ENCODE measurements at regions of chr5 and their contacts with region 1.

Region 1: GRCh38 chr5:88729084-88729828 is 153.7 kb downstream of the MEF2C start:
- DNase-seq: peak in 1 of 2 donors; percentile 74
- H3K4me3 ChIP-seq: no peak overlapping the region
- CTCF ChIP-seq: peak in 1 of 3 donors; percentile 57
- POLR2A ChIP-seq: no peak

Region 2: GRCh38 chr5:88690409-88691229 is 38.6 kb before region 1 on chr5:
- intact Hi-C with region 1: no loop called
- DNase-seq: peak; percentile 48 to 93
- H3K4me3 ChIP-seq: no peak overlapping the region
- CTCF ChIP-seq: no peak
- POLR2A ChIP-seq: no peak

Region 3: DNA sequence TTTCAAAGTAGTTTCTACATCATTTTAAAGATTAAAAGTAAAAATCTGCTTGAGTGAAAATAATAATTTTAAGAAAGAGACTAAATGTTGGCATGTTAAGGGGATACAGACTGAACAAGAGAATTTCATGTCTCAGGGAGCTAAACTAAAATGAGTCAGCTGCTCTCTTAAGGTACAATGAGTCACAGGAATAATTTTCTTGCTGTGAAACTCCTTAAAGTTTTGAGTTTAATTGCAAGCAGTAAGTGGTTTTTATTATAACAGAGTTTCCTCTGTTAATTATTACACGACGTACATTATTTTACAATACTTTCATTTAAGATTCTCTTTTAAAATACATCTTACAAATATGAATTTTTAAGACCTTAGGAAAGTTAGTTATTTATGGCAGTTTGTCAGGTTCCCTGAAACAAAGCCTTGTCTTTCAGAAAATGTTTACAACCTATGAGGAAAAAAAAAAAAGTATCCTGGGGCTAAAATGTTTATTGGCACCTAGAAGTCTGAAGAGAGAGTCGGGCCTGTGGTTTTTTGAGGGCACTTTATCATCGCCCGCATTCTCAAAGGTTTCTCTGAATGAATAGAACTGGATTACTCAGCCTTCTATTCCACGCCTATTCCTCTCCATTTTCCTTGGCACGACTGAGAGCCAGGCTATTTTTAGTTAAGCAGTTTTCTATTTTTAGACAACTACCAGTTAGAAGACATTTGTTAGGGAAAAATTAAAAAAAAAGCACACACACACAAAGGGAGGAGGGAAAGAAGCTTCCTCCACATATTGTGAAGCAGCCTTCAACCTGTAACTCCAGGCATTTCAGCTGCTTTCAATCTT is 56.3 kb after region 1 on chr5:
- intact Hi-C with region 1: no loop called
- DNase-seq: peak in 1 of 2 donors; percentile 31
- H3K4me3 ChIP-seq: no peak overlapping the region
- CTCF ChIP-seq: no peak
- POLR2A ChIP-seq: no peak

Region 4: DNA sequence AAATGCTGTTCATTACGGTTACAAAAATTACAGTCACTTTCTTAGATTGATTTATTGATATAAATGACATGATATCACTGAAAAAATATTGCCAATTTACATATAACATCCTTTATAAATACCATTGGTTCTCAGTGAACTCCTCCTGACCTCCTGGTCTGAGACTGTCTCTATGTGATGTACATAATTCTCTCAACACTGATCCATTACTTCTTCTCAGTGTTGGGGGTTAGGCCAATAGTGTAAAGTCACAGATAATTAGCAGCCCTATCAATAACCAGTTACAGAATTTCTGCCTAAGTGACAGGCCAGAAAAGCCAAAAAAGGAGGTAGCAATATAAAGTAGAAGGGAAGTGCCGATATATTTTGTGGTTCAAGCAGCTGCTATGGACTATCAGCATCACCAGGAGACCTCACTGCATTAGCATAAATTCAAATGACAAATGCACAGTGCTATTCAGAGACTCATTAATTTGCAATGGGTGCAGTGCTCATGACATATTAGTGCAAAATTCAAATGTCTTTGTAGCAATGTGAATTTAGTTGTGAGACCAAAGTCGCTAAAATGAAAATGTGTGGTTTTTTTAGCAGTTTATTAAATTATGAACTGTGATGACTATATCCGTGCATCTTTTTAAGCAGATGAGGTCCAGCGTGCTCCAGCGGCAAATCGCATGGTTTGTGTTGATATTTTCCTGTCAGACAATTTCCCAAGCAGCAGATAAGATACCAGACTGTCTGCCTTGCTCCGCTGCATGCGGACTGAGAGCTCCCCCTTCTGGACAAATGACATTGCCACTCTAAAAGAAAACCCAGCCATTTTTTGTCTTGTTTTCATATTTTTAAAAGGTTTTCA is 1535.7 kb after region 1 on chr5:
- intact Hi-C with region 1: loop called (anchors 10 kb)
- DNase-seq: peak in 1 of 2 donors; percentile 23
- H3K4me3 ChIP-seq: no peak overlapping the region
- CTCF ChIP-seq: no peak
- POLR2A ChIP-seq: no peak

Measured in lower leg skin (tissue), 4 donors.